MCF 10A (cell line): ENCODE measurements at regions of chr17 and their contacts with region 1.

Region 1: GRCh38 chr17:64420143-64420971 is 28.6 kb upstream of the MILR1 start:
- DNase-seq: peak; percentile 87
- H3K4me3 Mint-ChIP-seq: no peak overlapping the region
- H3K27ac Mint-ChIP-seq: no peak overlapping the region
- H3K4me1 Mint-ChIP-seq: no peaks in the 10 kb centered on the region
- H3K27me3 Mint-ChIP-seq: no peaks in the 10 kb centered on the region
- CTCF ChIP-seq: peak; percentile 73

Region 2: DNA sequence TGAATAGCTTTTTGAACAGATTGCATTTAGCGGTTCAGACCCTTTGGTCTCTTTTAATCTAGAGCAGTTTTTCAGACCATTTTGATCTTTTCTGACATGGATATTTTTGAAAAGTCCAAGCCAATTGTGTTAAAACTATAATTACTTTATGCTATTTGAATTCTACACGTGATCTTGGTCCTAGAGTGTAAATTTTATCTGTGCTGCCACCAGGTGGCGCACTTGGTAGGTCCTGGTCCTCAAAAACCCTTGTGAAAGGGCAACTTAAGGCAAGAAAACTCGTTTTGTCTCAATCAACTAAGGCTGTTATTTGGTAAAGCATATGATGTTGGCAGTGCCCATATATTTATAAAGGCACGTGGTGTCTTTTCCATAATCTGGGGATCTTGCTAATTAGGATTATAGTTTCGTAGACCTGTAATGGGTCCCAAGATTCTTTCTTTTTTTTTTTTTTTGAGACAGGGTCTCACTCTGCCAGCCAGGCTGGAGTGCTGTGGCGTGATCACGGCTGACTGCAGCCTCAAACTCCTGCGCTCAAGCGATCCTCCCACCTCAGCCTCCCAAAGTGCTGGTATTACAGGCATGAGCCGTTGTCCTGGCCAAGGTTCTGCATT is 113.4 kb before region 1 on chr17:
- CTCF ChIA-PET with region 1: interaction called, 93 read pairs
- POLR2A ChIA-PET with region 1: interaction called, 5 read pairs
- intact Hi-C with region 1: loop called (anchors 1 kb)
- DNase-seq: peak; percentile 82
- H3K4me3 Mint-ChIP-seq: no peak overlapping the region
- H3K27ac Mint-ChIP-seq: no peak overlapping the region
- H3K4me1 Mint-ChIP-seq: no peaks in the 10 kb centered on the region
- H3K27me3 Mint-ChIP-seq: no peaks in the 10 kb centered on the region
- CTCF ChIP-seq: peak; percentile 78

Region 3: GRCh38 chr17:64320613-64321553 is 99.5 kb before region 1 on chr17:
- CTCF ChIA-PET with region 1: interaction called, 239 read pairs
- POLR2A ChIA-PET with region 1: interaction called, 4 read pairs
- intact Hi-C with region 1: loop called (anchors 1 kb)
- DNase-seq: peak; percentile 92
- H3K4me3 Mint-ChIP-seq: no peak overlapping the region
- H3K27ac Mint-ChIP-seq: peak overlapping the region; percentile 20
- H3K4me1 Mint-ChIP-seq: peaks cover 18% of the 10 kb centered on the region
- H3K27me3 Mint-ChIP-seq: no peaks in the 10 kb centered on the region
- CTCF ChIP-seq: peak; percentile 69

Region 4: DNA sequence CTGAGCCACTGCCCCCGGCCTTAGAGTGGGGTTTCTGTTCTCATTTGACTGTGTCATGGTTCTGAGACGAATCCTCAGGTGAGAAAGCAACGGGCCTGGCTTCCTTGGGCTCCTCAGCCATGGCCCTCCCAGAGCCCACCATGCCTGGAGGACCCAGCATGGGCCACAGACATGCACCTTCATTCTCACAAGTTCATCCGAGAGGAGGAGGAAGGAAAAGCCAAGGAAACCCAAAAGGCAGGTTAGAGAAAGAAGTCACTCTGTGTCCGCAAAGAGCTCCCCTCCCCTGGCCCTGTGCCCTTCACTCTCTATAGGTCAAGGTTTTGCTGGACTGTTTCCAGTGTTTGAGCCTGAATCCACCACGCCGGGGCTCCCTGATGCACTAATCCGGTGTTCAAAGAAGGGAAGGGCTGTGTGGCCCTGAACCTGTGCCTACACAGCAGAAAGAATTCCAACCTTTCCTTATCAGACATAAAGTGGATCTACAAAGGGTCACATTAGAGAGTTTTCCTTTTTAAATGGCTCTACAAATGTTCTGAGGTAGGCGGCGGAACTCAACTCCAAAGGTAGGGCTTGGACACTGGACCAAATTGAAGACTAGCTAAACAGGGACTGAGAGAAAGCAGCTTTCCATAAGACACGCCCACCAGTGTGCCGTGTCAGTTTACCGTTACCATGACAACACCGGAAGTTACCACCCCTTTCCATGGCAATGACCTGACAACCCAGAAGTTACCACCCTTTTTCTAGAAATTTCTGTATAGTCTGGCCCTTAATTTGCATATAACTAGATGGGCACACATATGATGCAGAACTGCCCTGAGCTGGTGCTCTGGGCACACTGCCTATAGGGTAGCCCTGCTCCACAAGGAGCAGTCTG is 13.8 kb before region 1 on chr17:
- CTCF ChIA-PET with region 1: interaction called, 21 read pairs
- POLR2A ChIA-PET with region 1: no interaction called
- intact Hi-C with region 1: no loop called
- DNase-seq: peak; percentile 47
- H3K4me3 Mint-ChIP-seq: no peak overlapping the region
- H3K27ac Mint-ChIP-seq: no peak overlapping the region
- H3K4me1 Mint-ChIP-seq: peaks cover 3% of the 10 kb centered on the region
- H3K27me3 Mint-ChIP-seq: no peaks in the 10 kb centered on the region
- CTCF ChIP-seq: no peak

Region 5: DNA sequence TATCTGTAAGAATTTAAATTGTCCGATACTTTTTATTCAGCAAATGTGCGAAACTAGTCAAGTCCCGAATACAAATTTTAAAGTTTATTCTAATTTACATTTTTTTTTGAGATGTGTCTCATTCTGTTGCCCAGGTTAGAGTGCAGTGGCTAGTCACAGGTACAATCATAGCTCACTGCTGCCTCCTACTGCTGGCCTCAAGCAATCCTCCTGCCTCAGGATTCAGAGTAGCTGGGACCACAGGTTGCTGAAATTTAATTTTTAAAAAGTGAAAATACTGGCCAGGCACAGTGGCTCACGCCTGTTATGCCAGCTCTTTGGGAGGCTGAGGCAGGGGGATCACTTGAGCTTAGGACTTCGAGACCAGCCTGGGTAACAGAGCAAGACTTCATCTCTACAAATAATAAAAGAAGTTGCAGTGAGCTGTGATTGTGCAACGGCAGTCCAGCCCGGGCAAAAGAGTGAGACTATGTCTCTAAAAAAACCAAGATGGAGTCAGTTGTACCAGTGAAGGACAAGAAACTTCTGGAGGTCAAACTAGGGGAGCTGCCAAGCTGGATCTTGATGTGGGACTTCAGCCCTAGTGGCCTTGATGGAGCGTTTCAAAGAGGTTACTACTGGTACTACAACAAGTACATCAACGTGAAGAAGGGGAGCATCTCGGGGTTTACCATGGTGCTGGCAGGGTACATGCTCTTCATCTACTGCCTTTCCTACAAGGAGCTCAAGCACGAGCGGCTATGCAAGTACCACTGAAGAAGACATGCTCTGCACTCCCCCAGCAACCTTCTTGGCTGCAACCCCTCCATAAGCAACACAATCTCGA is 70.9 kb after region 1 on chr17:
- CTCF ChIA-PET with region 1: interaction called, 49 read pairs
- POLR2A ChIA-PET with region 1: interaction called, 13 read pairs
- intact Hi-C with region 1: loop called (anchors 1 kb)
- DNase-seq: peak; percentile 63
- H3K4me3 Mint-ChIP-seq: no peak overlapping the region
- H3K27ac Mint-ChIP-seq: no peak overlapping the region
- H3K4me1 Mint-ChIP-seq: peaks cover 13% of the 10 kb centered on the region
- H3K27me3 Mint-ChIP-seq: no peaks in the 10 kb centered on the region
- CTCF ChIP-seq: peak; percentile 40

Region 6: GRCh38 chr17:64773836-64774761 is 353.7 kb after region 1 on chr17:
- CTCF ChIA-PET with region 1: no interaction called
- POLR2A ChIA-PET with region 1: no interaction called
- intact Hi-C with region 1: loop called (anchors 1 kb)
- DNase-seq: peak; percentile 91
- H3K4me3 Mint-ChIP-seq: peak overlapping the region; percentile 66
- H3K27ac Mint-ChIP-seq: no peak overlapping the region
- H3K4me1 Mint-ChIP-seq: no peaks in the 10 kb centered on the region
- H3K27me3 Mint-ChIP-seq: no peaks in the 10 kb centered on the region
- CTCF ChIP-seq: peak; percentile 43